ENCODE measurements at regions of chr18 and their contacts with region 1.

Region 1: DNA sequence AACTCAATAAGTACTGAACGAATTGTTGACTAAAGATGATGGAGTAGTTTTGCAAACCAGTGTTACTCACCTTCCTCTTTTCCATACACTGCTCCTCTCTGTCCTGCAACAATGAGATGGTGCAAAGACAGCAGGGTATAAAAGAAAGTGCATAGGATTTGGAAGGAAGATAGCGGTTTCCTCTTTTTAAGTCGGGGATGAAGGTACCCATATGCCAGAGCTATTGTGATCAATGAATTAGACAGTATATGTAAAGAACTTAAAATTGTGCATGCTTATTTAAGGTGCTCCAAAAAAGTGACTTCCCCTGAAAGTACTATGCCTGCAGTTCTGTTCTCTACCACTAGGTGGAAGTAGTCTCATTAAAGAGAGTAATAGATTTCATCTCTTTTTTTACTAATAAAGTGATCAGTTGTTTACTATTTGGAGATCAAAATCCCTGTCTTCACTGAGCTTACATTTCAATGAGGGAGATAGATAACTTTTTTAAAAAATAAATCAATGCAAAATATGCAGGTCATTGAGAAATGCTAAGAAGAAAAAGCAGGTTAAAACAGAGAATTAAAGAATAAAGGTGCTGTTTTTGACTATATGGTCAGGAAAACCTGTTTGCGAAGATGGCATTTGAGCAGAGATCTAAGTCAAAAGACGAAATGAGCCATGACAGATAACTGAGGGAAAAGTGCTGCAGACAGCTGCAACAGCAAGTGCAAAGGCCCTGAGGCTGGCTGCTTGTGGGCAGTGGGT is 339.7 kb upstream of the SLC14A2 start:
- DNase-seq: no peak
- H3K4me3 ChIP-seq: no peak overlapping the region
- H3K27ac ChIP-seq: no peak overlapping the region
- H3K4me1 ChIP-seq: no peaks in the 10 kb centered on the region
- H3K27me3 ChIP-seq: no peaks in the 10 kb centered on the region
- CTCF ChIP-seq: peak in 2 of 3 experiments; percentile 41 to 68; a peak in 2 of 4 replicates
- EP300 ChIP-seq: no peak
- POLR2A ChIP-seq: no peak
- RAD21 ChIP-seq: peak; percentile 63 to 68

Region 2: GRCh38 chr18:45291621-45292615 is 16.4 kb after region 1 on chr18:
- CTCF ChIA-PET with region 1: interaction called, 49 read pairs
- POLR2A ChIA-PET with region 1: no interaction called
- DNase-seq: no peak
- H3K4me3 ChIP-seq: no peak overlapping the region
- H3K27ac ChIP-seq: no peak overlapping the region
- H3K4me1 ChIP-seq: no peaks in the 10 kb centered on the region
- H3K27me3 ChIP-seq: no peaks in the 10 kb centered on the region
- CTCF ChIP-seq: no peak
- EP300 ChIP-seq: no peak
- POLR2A ChIP-seq: no peak
- RAD21 ChIP-seq: no peak

Region 3: GRCh38 chr18:45355944-45356520 is 80.5 kb after region 1 on chr18:
- CTCF ChIA-PET with region 1: interaction called, 10 read pairs
- POLR2A ChIA-PET with region 1: no interaction called
- DNase-seq: no peak
- H3K4me3 ChIP-seq: no peak overlapping the region
- H3K27ac ChIP-seq: no peak overlapping the region
- H3K4me1 ChIP-seq: no peaks in the 10 kb centered on the region
- H3K27me3 ChIP-seq: no peaks in the 10 kb centered on the region
- CTCF ChIP-seq: 0 out of 4 replicates have a peak, but pooled peaks of 1 of the 3 experiments have one; percentile 2
- EP300 ChIP-seq: no peak
- POLR2A ChIP-seq: no peak
- RAD21 ChIP-seq: peak; percentile 19 to 31; a peak in 2 of 4 replicates

Region 4: GRCh38 chr18:45361125-45361851 is 85.7 kb after region 1 on chr18:
- CTCF ChIA-PET with region 1: interaction called, 10 read pairs
- POLR2A ChIA-PET with region 1: no interaction called
- DNase-seq: no peak
- H3K4me3 ChIP-seq: no peak overlapping the region
- H3K27ac ChIP-seq: no peak overlapping the region
- H3K4me1 ChIP-seq: no peaks in the 10 kb centered on the region
- H3K27me3 ChIP-seq: no peaks in the 10 kb centered on the region
- CTCF ChIP-seq: no peak
- EP300 ChIP-seq: no peak
- POLR2A ChIP-seq: no peak
- RAD21 ChIP-seq: no peak